Pancreas (tissue), 10 donors: ENCODE measurements at regions of chrX and their contacts with region 1.

Region 1: DNA sequence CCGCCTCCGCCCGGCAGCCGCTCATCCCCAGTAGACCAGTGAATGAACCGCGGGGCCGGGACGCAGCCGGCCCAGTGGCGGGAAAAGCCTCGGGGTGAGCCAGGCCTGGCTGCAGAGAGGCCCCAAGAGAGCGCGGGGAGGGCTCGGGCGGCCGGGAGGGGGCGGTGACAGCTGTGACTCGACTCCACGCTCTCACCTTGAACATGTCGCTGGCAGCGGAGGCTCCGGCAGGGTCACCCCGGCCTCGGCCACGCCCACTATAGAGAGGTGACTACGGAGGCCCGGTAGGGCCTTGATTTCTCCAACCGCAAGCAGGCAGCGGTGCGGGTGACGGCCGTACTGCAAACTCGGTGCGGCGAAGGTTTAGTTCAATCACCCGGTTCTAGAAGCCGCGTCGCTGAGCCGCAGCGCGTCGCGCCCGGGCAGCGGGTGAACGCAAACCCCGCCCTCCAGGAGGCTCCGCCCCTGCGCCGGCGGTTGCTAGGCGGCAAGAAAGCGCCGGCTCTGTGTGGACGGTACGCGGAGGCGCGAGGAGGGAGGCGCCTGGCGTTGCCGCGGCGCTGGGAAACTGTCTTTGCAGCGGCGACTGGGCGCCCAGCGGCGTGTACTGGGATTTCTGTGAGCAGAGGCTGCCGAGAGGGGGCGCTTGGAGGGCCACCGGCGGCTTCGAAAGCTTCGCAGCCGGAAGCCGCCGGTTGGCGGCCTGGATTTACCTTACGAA is at the starts of genes APOO and CXorf58:
- DNase-seq: peak; percentile 87 to 95 (median 91)
- ATAC-seq: peak; percentile 94 to 97 (median 94)
- H3K4me3 ChIP-seq: peak within 1 kb of the TSS; percentile 16 to 53 (median 40)
- H3K27ac ChIP-seq: peak within 1 kb of the TSS; percentile 80 to 84 (median 82)
- H3K4me1 ChIP-seq: peaks cover 0 to 6% (median 0%) of the 10 kb centered on the region in 3 donors
- H3K27me3 ChIP-seq: peaks cover 0 to 3% (median 0%) of the 10 kb centered on the region in 4 donors
- CTCF ChIP-seq: peak; percentile 51 to 76 (median 66)
- total RNA-seq, gene APOO: 4.8 to 11.5 (median 7.6) TPM
- total RNA-seq, gene CXorf58: 0.09 to 0.40 (median 0.16) TPM in 5 of 6 donors, not detected in the other

Region 2: GRCh38 chrX:23633834-23634580 is 273.7 kb before region 1 on chrX:
- intact Hi-C with region 1: no loop called
- DNase-seq: no peak
- ATAC-seq: peak in 1 of 4 donors; percentile 44
- H3K4me3 ChIP-seq: no peak overlapping the region
- H3K27ac ChIP-seq: no peak overlapping the region
- H3K4me1 ChIP-seq: no peaks in the 10 kb centered on the region
- H3K27me3 ChIP-seq: peaks cover 0 to 4% (median 0%) of the 10 kb centered on the region in 4 donors
- CTCF ChIP-seq: no peak

Region 3: DNA sequence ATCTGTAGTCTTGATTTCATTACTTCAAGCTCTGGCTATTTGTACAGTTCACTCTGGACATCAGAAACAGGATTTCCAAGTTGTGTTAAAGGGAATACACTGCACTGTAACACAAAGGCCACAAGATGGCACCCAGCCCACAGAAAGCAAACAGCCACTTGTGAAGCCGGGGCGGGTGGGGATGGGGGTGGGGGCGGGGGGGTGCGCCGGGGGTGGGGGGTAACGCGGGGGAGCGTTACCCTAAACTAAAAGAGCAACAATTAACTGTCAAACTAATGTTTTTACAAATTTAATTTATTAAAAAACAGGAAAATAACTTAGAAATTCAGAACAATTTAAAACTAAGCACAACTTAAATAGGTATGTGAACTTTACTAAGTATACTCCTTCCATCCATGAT is 213.1 kb before region 1 on chrX:
- intact Hi-C with region 1: loop called in 1 of 3 experiments (anchors 5 kb)
- DNase-seq: peak in 5 of 6 donors; percentile 17 to 63 (median 44)
- ATAC-seq: peak; percentile 66 to 88 (median 85)
- H3K4me3 ChIP-seq: no peak overlapping the region
- H3K27ac ChIP-seq: no peak overlapping the region
- H3K4me1 ChIP-seq: no peaks in the 10 kb centered on the region
- H3K27me3 ChIP-seq: no peaks in the 10 kb centered on the region
- CTCF ChIP-seq: peak in 3 of 4 donors; percentile 26 to 38 (median 35)

Region 4: GRCh38 chrX:23773601-23774175 is 134.0 kb before region 1 on chrX:
- intact Hi-C with region 1: loop called in 1 of 3 experiments (anchors 10 kb)
- DNase-seq: no peak
- ATAC-seq: peak in 3 of 4 donors; percentile 53 to 86 (median 77)
- H3K4me3 ChIP-seq: no peak overlapping the region
- H3K27ac ChIP-seq: peak overlapping the region in 2 of 4 donors; percentile 20 to 55
- H3K4me1 ChIP-seq: no peaks in the 10 kb centered on the region
- H3K27me3 ChIP-seq: no peaks in the 10 kb centered on the region
- CTCF ChIP-seq: no peak